ENCODE measurements at regions of chr14 and their contacts with region 1.

Region 1: DNA sequence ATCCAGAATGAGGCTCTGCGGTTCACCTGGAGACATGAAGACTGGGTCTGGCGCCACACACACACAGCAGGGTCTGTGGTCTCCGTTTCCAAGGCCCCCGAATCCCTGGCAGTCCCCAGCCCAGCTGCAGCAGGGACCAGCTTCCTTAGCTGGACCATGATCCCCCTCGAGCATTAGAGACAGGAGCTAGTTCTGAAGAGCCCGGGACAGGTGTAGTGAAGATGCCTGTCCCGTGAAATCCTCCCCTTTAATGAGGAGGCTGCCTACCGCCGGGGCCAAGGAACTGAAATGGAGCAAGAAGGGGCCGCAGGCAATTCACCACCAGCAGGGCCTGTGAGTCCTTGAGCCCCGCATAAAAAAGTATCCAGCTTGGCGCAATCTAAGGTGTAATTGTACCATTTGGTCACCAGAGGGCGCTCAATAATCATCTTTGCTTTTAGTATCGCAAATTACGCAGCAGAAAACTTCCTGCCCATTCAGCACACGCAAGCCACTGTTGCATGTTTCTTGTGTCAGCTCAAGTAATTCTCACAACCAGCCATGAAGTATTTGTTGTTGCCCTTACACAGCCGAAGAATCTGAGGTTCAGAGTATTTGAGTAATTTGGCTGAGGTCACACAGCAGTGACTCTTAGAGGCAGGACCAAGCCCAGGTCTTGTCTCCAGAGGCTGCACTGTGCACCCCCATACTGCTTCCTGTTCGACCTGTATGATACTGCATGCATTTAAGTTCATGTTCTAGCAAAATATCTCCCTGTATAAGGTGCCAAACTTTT is 54.3 kb upstream of the PPP2R5C start:
- DNase-seq: peak; percentile 92
- H3K4me3 Mint-ChIP-seq: peak overlapping the region; percentile 56
- H3K27ac Mint-ChIP-seq: peak overlapping the region; percentile 79
- H3K4me1 Mint-ChIP-seq: peaks cover 24% of the 10 kb centered on the region
- H3K27me3 Mint-ChIP-seq: peaks cover 21% of the 10 kb centered on the region

Region 2: GRCh38 chr14:101731187-101732080 is 24.2 kb after region 1 on chr14:
- intact Hi-C with region 1: loop called (anchors 1 kb)
- DNase-seq: peak; percentile 94
- H3K4me3 Mint-ChIP-seq: peak overlapping the region; percentile 84
- H3K27ac Mint-ChIP-seq: peak overlapping the region; percentile 98
- H3K4me1 Mint-ChIP-seq: peaks cover 56% of the 10 kb centered on the region
- H3K27me3 Mint-ChIP-seq: no peaks in the 10 kb centered on the region

Region 3: GRCh38 chr14:101767618-101768362 is 60.5 kb after region 1 on chr14:
- intact Hi-C with region 1: loop called (anchors 2 kb)
- DNase-seq: peak; percentile 27
- H3K4me3 Mint-ChIP-seq: no peak overlapping the region
- H3K27ac Mint-ChIP-seq: no peak overlapping the region
- H3K4me1 Mint-ChIP-seq: peaks cover 29% of the 10 kb centered on the region
- H3K27me3 Mint-ChIP-seq: no peaks in the 10 kb centered on the region

Region 4: DNA sequence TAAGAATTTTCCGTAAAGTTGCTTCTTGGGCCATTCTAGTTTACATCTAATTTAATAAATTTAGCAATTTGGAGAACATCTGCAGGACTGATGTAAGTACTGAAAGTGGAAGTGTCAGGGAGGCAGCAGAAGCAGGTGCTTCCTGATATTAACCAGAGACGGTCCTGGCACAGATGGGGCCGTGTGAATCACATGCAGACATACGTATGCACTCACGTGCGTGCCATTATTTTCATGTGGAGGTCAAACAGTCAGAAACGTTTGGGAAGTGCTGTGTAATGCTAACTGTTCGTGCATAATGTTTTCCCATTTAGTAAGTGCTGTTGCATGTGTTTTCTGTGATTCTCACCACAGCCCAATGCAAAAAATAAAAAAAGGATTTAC is 169.3 kb after region 1 on chr14:
- intact Hi-C with region 1: loop called (anchors 2 kb)
- DNase-seq: peak; percentile 88
- H3K4me3 Mint-ChIP-seq: peak overlapping the region; percentile 82
- H3K27ac Mint-ChIP-seq: peak overlapping the region; percentile 93
- H3K4me1 Mint-ChIP-seq: peaks cover 67% of the 10 kb centered on the region
- H3K27me3 Mint-ChIP-seq: no peaks in the 10 kb centered on the region

Region 5: GRCh38 chr14:102020058-102020971 is 313.1 kb after region 1 on chr14:
- intact Hi-C with region 1: loop called (anchors 2 kb)
- DNase-seq: peak; percentile 85
- H3K4me3 Mint-ChIP-seq: peak overlapping the region; percentile 54
- H3K27ac Mint-ChIP-seq: peak overlapping the region; percentile 88
- H3K4me1 Mint-ChIP-seq: peaks cover 22% of the 10 kb centered on the region
- H3K27me3 Mint-ChIP-seq: no peaks in the 10 kb centered on the region